Endothelial cell of umbilical vein (primary cell): ENCODE measurements at regions of chr5 and their contacts with region 1.

Region 1: GRCh38 chr5:112811023-112811422 is 50.1 kb upstream of the SRP19 start:
- DNase-seq: no peak
- H3K4me3 ChIP-seq: no peak overlapping the region
- H3K27ac ChIP-seq: no peak overlapping the region
- H3K4me1 ChIP-seq: no peaks in the 10 kb centered on the region
- H3K27me3 ChIP-seq: no peaks in the 10 kb centered on the region
- CTCF ChIP-seq: no peak
- POLR2A ChIP-seq: no peak

Region 2: DNA sequence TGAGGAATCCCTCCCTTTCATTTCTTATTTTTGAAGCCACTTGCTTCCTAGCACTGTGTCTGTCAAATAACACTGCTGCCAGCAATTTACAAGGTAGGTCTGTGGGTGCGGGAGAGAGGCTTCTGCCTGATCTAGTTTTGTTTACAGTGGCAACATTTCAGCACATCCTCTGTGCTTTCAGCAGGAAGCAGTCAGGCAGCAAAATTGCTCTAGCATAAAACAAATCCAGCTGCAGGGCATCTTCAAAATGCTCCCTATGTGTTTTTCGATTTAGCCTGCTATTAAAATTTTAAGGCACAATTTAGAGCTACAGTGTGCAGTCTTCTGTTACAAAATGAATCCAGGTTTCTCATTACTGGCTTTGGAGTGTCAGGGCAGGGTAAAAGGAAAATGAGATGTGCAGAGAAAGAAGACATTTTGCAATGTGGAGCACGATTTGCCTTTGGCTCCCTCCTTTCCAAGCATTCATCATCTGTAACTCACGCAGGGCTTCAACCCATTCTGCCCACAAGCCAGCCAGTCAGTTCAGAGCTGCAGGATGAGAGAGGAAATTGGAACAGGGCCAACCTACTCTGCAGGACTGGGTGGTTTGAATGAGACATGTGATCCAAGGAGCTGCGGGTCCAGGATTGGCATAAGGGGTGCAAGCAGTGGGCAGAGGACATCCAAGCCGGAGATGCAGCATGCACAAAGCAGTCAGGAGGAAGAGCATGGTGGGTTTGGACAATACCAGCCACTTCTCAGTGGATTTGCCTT is 216.8 kb before region 1 on chr5:
- CTCF ChIA-PET with region 1: no interaction called
- POLR2A ChIA-PET with region 1: no interaction called
- dilution Hi-C with region 1: no loop called
- intact Hi-C with region 1: no loop called
- DNase-seq: no peak
- H3K4me3 ChIP-seq: no peak overlapping the region
- H3K27ac ChIP-seq: no peak overlapping the region
- H3K4me1 ChIP-seq: no peaks in the 10 kb centered on the region
- H3K27me3 ChIP-seq: peaks cover 0 to 8% of the 10 kb centered on the region in 2 experiments
- CTCF ChIP-seq: no peak
- POLR2A ChIP-seq: no peak

Region 3: GRCh38 chr5:112823623-112824596 is 12.9 kb after region 1 on chr5:
- CTCF ChIA-PET with region 1: interaction called, 3 read pairs
- POLR2A ChIA-PET with region 1: no interaction called
- dilution Hi-C with region 1: no loop called
- intact Hi-C with region 1: loop called (anchors 1 kb)
- DNase-seq: no peak
- H3K4me3 ChIP-seq: no peak overlapping the region
- H3K27ac ChIP-seq: no peak overlapping the region
- H3K4me1 ChIP-seq: no peaks in the 10 kb centered on the region
- H3K27me3 ChIP-seq: no peaks in the 10 kb centered on the region
- CTCF ChIP-seq: no peak
- POLR2A ChIP-seq: no peak

Region 4: GRCh38 chr5:112869948-112870347 is 58.9 kb after region 1 on chr5:
- CTCF ChIA-PET with region 1: no interaction called
- POLR2A ChIA-PET with region 1: no interaction called
- dilution Hi-C with region 1: no loop called
- intact Hi-C with region 1: no loop called
- DNase-seq: no peak
- H3K4me3 ChIP-seq: no peak overlapping the region
- H3K27ac ChIP-seq: no peak overlapping the region
- H3K4me1 ChIP-seq: no peaks in the 10 kb centered on the region
- H3K27me3 ChIP-seq: no peaks in the 10 kb centered on the region
- CTCF ChIP-seq: no peak
- POLR2A ChIP-seq: no peak